PC-3 (cell line): ENCODE measurements at regions of chr10 and their contacts with region 1.

Region 1: DNA sequence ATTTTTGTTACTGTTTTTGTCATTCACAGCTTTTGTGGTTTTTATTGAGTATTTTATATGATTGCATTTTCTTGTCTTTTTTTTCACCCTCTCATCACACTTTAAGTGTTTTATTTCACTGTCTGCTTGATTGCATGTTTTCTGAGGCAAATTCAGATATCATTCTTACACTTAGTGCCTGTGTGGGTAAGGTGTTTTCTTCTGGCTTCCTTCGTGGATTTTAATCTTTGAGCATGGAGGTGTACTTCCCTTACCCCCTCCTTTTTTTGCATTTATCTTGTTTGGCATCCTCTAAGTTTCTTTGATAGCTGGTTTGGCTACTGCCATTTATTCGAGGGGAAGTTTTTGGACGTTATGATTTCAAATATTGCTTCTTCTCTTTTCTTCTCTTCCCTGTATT is 127.9 kb downstream of the MLLT10 start:
- DNase-seq: no peak
- ATAC-seq: no peak
- H3K4me3 ChIP-seq: no peak overlapping the region
- H3K27ac ChIP-seq: no peak overlapping the region
- H3K4me1 ChIP-seq: no peaks in the 10 kb centered on the region
- H3K27me3 ChIP-seq: no peaks in the 10 kb centered on the region
- CTCF ChIP-seq: no peak

Region 2: DNA sequence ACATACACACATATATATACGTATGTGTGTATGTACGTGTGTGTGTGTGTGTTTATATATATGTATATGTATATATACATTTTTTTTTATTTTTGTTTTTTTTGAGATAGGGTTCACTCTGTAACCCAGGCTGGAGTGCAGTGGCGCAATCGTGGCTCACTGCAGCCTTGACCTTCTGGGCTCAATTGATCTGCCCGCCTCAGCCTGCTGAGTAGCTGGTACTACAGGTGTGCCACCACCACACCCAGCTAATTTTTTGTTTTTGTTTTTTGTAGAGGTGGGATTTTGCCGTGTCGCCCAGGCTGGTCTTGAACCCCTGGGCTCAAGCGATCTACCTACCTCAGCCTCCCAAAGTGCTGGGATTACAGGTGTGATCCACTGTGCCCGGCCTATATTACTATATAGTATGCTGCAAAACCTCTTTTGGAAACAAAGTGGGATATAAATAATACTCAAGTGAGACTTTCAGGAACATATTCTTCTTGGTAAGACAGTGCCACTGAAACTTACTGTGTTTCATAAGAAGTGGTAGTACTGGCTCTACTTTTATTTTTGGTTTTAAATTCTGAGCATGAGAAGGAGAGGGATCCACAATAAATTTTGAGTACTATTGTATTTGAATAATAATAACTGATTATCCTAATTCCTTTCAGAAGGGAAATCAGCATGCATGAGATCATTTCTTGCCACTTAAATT is 77.0 kb before region 1 on chr10:
- CTCF ChIA-PET with region 1: no interaction called
- POLR2A ChIA-PET with region 1: interaction called, 16 read pairs
- intact Hi-C with region 1: no loop called
- DNase-seq: no peak
- ATAC-seq: no peak
- H3K4me3 ChIP-seq: no peak overlapping the region
- H3K27ac ChIP-seq: no peak overlapping the region
- H3K4me1 ChIP-seq: no peaks in the 10 kb centered on the region
- H3K27me3 ChIP-seq: no peaks in the 10 kb centered on the region
- CTCF ChIP-seq: no peak

Region 3: GRCh38 chr10:21807180-21807579 is 145.2 kb after region 1 on chr10:
- CTCF ChIA-PET with region 1: no interaction called
- POLR2A ChIA-PET with region 1: no interaction called
- intact Hi-C with region 1: no loop called
- DNase-seq: no peak
- ATAC-seq: no peak
- H3K4me3 ChIP-seq: no peak overlapping the region
- H3K27ac ChIP-seq: no peak overlapping the region
- H3K4me1 ChIP-seq: no peaks in the 10 kb centered on the region
- H3K27me3 ChIP-seq: no peaks in the 10 kb centered on the region
- CTCF ChIP-seq: no peak